H1 (cell line): ENCODE measurements at regions of chr22 and their contacts with region 1.

Region 1: DNA sequence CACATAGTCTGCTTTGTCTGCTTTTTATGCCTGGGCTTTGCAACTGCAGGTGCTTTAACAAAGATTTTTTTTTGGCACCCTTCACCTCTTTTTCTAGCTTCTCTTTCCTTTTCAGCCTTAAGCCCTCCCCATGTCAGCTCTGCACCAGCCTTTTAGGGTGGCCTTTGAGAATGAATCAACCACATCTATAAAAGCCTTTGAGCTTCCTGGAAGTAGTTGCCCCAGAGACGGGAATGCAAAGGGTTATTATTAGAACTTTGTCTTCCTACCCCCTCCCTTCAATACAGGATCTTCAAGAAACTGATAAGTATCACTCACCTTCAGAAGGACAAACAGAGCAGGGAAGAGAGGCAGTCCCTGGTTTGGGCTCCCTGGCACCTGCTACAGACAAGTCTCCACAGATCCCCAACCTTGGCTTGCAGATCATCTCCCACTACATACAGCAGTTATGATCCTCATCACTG is 8.0 kb downstream of the PVALB start:
- DNase-seq: no peak
- H3K4me3 ChIP-seq: no peak overlapping the region
- H3K27ac ChIP-seq: no peak overlapping the region
- H3K4me1 ChIP-seq: peaks cover 0 to 5% (median 0%) of the 10 kb centered on the region in 4 experiments; a peak in 2 of 7 replicates
- H3K27me3 ChIP-seq: peaks cover 0 to 2% (median under 1%) of the 10 kb centered on the region in 4 experiments; a peak in 1 of 7 replicates
- CTCF ChIP-seq: no peak
- EP300 ChIP-seq: no peak
- POLR2A ChIP-seq: no peak
- RAD21 ChIP-seq: no peak

Region 2: GRCh38 chr22:36671404-36671803 is 137.4 kb before region 1 on chr22:
- CTCF ChIA-PET with region 1: no interaction called
- POLR2A ChIA-PET with region 1: no interaction called
- DNase-seq: no peak
- H3K4me3 ChIP-seq: no peak overlapping the region
- H3K27ac ChIP-seq: no peak overlapping the region
- H3K4me1 ChIP-seq: peaks cover 0 to 6% (median 0%) of the 10 kb centered on the region in 4 experiments; a peak in 1 of 7 replicates
- H3K27me3 ChIP-seq: no peaks in the 10 kb centered on the region
- CTCF ChIP-seq: no peak
- EP300 ChIP-seq: no peak
- POLR2A ChIP-seq: no peak
- RAD21 ChIP-seq: no peak

Region 3: DNA sequence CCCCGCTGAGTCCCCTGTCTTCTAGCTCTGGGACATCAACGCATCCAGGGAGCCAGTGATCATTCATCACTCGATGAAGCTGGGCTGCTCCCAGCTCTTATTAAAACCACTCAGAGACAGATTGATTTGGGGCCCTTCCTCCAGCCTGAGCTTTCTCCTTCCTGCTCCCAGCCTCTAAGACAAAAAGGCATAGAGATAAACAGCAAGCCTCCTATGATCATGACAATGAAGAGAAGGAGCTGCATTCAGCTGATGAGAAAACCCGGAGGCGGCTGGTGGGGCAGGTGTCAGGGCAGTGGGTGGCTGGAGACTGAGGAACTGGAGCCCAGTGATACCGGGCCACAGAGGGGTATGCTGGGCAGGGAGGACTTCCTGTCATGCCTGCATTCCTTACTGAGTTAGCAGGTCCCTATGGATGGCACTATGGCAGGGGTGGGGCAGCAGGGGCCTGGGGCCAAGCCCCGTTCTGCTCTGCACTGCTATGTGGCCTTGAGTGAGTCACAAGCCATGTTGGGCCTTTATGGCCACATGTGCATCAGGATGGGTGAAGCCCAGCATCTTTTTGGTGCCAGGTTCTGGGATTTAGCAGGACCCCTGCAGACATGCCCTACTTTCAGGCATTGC is 12.1 kb before region 1 on chr22:
- CTCF ChIA-PET with region 1: interaction called, 10 read pairs
- POLR2A ChIA-PET with region 1: no interaction called
- DNase-seq: peak in 1 of 2 experiments; percentile 51
- H3K4me3 ChIP-seq: peak overlapping the region in 3 of 4 experiments; percentile 9 to 26 (median 10); a peak in 2 of 8 replicates
- H3K27ac ChIP-seq: no peak overlapping the region
- H3K4me1 ChIP-seq: peaks cover 8 to 23% (median 15%) of the 10 kb centered on the region in 4 experiments
- H3K27me3 ChIP-seq: no peaks in the 10 kb centered on the region
- CTCF ChIP-seq: no peak
- EP300 ChIP-seq: no peak
- POLR2A ChIP-seq: no peak
- RAD21 ChIP-seq: no peak

Region 4: GRCh38 chr22:36873680-36874537 is 65.1 kb after region 1 on chr22:
- CTCF ChIA-PET with region 1: no interaction called
- POLR2A ChIA-PET with region 1: no interaction called
- DNase-seq: no peak
- H3K4me3 ChIP-seq: no peak overlapping the region
- H3K27ac ChIP-seq: no peak overlapping the region
- H3K4me1 ChIP-seq: no peaks in the 10 kb centered on the region; a peak in 1 of 7 replicates
- H3K27me3 ChIP-seq: no peaks in the 10 kb centered on the region; a peak in 1 of 7 replicates
- CTCF ChIP-seq: peak; percentile 62 to 76 (median 72)
- EP300 ChIP-seq: no peak
- POLR2A ChIP-seq: no peak
- RAD21 ChIP-seq: peak; percentile 65 to 82

Region 5: DNA sequence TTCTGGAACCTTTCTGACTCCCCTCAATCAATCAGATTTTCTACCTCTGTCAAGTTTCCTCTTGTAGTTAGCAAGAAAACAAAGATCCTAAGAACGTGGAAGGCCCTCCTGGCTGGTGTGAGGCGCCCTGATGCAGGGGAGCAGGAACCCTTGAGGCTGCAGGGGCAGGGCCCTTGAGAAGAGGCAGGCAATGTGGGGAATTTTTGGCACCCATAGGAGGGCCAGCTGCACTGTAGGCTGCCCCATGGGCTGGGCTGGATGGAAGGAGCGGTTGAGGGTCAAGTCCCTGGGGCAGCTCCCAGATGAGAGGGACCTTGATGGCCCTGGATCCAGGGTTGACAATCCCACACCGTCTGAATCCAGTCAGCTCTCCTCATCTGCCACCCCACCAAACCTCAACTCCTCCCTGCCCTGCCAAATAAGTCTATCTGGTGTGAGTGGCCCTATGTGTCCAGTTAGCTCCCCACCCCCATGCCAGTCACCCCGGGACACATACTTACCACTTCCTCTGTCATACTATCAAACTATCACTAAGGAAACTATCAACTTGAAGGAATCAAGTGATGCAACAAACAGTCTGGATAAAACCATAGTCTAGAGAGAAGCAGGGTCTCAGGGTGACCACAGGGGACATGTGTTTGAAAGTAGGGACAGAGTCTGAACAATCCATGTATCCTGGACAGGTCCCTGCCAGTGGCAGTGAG is 91.3 kb after region 1 on chr22:
- CTCF ChIA-PET with region 1: no interaction called
- POLR2A ChIA-PET with region 1: no interaction called
- DNase-seq: no peak
- H3K4me3 ChIP-seq: peak overlapping the region in 1 of 4 experiments; percentile 20; a peak in 2 of 8 replicates
- H3K27ac ChIP-seq: peak overlapping the region; percentile 47; the same call in 1 of the 2 replicates
- H3K4me1 ChIP-seq: peaks cover 11 to 17% (median 13%) of the 10 kb centered on the region in 4 experiments
- H3K27me3 ChIP-seq: peaks cover 0 to 6% (median 2%) of the 10 kb centered on the region in 4 experiments; a peak in 2 of 7 replicates
- CTCF ChIP-seq: no peak
- EP300 ChIP-seq: no peak
- POLR2A ChIP-seq: no peak; a peak in 1 of 3 replicates
- RAD21 ChIP-seq: no peak